PC-9 (cell line): ENCODE measurements at regions of chr15 and their contacts with region 1.

Region 1: DNA sequence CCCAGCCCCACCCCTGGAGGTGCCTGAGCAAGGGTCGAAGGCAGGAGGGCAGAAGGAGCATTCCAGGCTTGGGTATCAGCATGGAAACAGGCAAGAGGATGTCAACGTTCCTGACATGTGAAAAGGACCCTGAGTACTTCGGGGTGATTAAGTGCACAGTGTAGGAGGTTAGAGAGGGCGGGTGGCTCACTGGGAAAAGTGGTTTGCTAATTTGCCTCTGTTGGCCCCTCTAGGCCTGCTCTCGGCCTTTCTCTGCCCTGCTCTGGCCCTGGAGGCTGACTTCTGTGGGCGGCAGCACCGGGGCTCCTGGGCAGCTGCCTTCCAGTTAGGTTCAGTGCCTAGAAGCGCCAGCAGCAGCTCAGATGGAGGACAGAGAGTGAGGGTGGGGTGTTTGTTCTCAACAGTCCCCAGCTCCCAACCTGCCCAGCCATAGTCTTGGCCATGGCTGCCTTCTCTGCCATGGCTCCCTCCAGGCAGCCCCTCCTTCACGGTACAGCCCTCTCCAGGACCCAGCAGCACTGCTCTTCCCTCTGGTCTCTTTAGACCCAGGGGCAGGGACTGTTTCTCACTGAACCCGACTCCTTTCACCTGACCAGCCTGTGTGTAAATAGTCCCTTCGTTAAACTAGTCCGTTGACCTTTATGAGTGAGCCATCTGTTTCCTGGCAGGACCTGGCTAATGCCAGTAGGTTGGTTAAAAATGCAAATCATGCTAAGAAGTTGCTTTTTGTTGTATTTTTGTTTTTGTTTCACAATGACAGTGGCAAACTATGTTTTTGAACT is 107.1 kb upstream of the TPM1 start:
- DNase-seq: no peak
- H3K4me3 ChIP-seq: no peak overlapping the region
- H3K27ac ChIP-seq: no peak overlapping the region
- H3K4me1 ChIP-seq: peaks cover 15% of the 10 kb centered on the region
- H3K27me3 ChIP-seq: no peaks in the 10 kb centered on the region
- CTCF ChIP-seq: no peak

Region 2: GRCh38 chr15:62958528-62959363 is 23.3 kb after region 1 on chr15:
- CTCF ChIA-PET with region 1: no interaction called
- POLR2A ChIA-PET with region 1: interaction called, 16 read pairs
- intact Hi-C with region 1: no loop called
- DNase-seq: no peak
- H3K4me3 ChIP-seq: no peak overlapping the region
- H3K27ac ChIP-seq: no peak overlapping the region
- H3K4me1 ChIP-seq: no peaks in the 10 kb centered on the region
- H3K27me3 ChIP-seq: no peaks in the 10 kb centered on the region
- CTCF ChIP-seq: no peak